CD8-positive, alpha-beta memory T cell (primary cell): ENCODE measurements at regions of chr9 and their contacts with region 1.

Region 1: GRCh38 chr9:133992780-133993634 is 883 bp upstream of the VAV2 start:
- DNase-seq: peak; percentile 64 to 78 (median 71)
- H3K4me3 ChIP-seq: peak overlapping the region; percentile 73
- H3K4me3 Mint-ChIP-seq: peak overlapping the region; percentile 78 to 88 (median 83)
- H3K27ac ChIP-seq: peak overlapping the region; percentile 51
- H3K27ac Mint-ChIP-seq: no peak overlapping the region
- H3K4me1 ChIP-seq: peaks cover 11% of the 10 kb centered on the region
- H3K4me1 Mint-ChIP-seq: peaks cover 0 to 15% (median 1%) of the 10 kb centered on the region in 3 donors
- H3K27me3 ChIP-seq: no peaks in the 10 kb centered on the region
- H3K27me3 Mint-ChIP-seq: peaks cover 8 to 11% of the 10 kb centered on the region in 2 donors

Region 2: GRCh38 chr9:133782157-133783130 is 210.6 kb before region 1 on chr9:
- CTCF ChIA-PET with region 1: interaction called, 94 read pairs
- POLR2A ChIA-PET with region 1: interaction called, 3 read pairs
- DNase-seq: peak; percentile 37 to 71 (median 40)
- H3K4me3 ChIP-seq: no peak overlapping the region
- H3K4me3 Mint-ChIP-seq: no peak overlapping the region
- H3K27ac ChIP-seq: no peak overlapping the region
- H3K27ac Mint-ChIP-seq: no peak overlapping the region
- H3K4me1 ChIP-seq: no peaks in the 10 kb centered on the region
- H3K4me1 Mint-ChIP-seq: no peaks in the 10 kb centered on the region
- H3K27me3 ChIP-seq: no peaks in the 10 kb centered on the region
- H3K27me3 Mint-ChIP-seq: peaks cover 0 to 3% of the 10 kb centered on the region in 2 donors

Region 3: DNA sequence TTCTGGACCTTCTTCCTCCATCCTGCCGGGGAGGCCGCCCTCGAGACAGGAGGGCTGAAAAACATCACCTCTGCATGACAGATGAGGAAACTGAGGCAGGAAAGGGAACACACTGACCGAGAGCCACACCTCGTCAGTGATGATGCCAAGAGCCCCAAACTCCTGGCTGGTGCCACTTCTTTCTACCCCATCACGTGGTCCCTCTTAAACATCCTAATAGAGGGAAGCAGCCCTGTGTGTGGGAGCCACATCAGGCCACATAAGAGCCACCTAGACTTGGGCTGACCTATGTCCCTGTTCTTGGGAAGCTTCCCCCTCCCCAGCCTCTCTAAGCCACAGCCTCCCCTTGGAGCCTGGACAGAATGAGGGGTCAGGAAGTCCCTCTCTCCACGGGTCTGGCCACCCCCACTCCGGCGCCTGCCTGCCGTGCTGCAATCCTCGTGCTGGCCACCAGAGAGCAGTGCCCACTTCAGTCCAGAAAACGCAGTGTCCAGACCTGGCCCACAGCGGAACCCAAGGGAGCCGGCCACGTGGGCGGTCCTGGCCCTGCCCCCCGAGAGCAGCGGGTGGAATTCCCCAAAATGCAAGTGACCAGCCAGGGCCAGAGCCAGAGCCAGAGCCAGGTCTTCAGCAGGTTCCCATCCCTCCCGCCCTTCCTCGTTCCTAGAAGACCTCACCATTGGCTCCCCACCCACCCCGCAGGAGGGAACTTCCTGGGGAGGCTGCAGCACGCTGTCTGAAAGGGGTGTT is 200.1 kb before region 1 on chr9:
- CTCF ChIA-PET with region 1: interaction called, 57 read pairs
- POLR2A ChIA-PET with region 1: no interaction called
- DNase-seq: peak; percentile 18 to 60 (median 34)
- H3K4me3 ChIP-seq: no peak overlapping the region
- H3K4me3 Mint-ChIP-seq: no peak overlapping the region
- H3K27ac ChIP-seq: no peak overlapping the region
- H3K27ac Mint-ChIP-seq: no peak overlapping the region
- H3K4me1 ChIP-seq: peaks cover 4% of the 10 kb centered on the region
- H3K4me1 Mint-ChIP-seq: peaks cover 2 to 8% (median 5%) of the 10 kb centered on the region in 3 donors
- H3K27me3 ChIP-seq: no peaks in the 10 kb centered on the region
- H3K27me3 Mint-ChIP-seq: no peaks in the 10 kb centered on the region

Region 4: DNA sequence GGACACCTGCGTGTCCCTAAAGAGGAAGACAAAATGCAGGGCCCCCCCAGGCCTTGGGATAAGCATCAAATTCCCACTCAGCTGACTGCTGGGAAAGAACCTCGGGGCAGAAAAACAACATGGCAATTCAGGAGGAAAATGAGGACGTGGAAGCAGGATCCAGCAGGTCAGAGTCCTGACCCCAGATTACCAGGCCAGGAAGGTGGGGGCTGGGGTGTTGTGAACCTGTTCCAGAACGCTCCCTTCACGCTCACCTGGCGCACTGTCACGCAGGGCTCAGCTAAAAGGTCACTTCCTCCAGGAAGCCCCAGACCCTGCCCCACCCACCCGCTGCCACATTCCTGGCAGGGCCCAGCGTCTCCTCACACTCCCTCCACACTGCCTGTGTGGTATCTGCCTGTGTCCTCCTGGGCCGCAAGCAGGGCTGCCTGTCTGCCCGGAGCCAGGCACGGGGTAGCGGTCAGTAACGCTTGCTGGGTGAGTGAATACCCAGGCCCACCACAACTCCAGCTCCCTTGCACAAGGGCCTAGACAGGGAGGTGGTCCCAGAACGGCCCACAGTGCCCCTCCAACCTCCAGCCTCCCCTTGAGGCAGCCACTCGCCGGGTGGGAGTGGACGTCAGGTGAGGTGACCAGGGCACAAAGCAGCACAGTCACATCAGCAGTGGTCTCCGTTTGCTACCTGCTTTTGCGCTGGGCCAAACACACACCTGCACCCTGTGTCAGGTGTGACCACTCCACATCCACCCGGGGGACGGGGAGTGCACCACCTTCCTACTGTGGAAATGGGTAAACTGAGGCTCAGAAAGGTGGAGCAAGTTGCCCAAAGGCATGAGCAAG is 19.0 kb before region 1 on chr9:
- CTCF ChIA-PET with region 1: no interaction called
- POLR2A ChIA-PET with region 1: no interaction called
- DNase-seq: peak in 1 of 5 donors; percentile 21
- H3K4me3 ChIP-seq: no peak overlapping the region
- H3K4me3 Mint-ChIP-seq: no peak overlapping the region
- H3K27ac ChIP-seq: no peak overlapping the region
- H3K27ac Mint-ChIP-seq: no peak overlapping the region
- H3K4me1 ChIP-seq: no peaks in the 10 kb centered on the region
- H3K4me1 Mint-ChIP-seq: no peaks in the 10 kb centered on the region
- H3K27me3 ChIP-seq: no peaks in the 10 kb centered on the region
- H3K27me3 Mint-ChIP-seq: no peaks in the 10 kb centered on the region